B cell (primary cell): ENCODE measurements at regions of chr3 and their contacts with region 1.

Region 1: DNA sequence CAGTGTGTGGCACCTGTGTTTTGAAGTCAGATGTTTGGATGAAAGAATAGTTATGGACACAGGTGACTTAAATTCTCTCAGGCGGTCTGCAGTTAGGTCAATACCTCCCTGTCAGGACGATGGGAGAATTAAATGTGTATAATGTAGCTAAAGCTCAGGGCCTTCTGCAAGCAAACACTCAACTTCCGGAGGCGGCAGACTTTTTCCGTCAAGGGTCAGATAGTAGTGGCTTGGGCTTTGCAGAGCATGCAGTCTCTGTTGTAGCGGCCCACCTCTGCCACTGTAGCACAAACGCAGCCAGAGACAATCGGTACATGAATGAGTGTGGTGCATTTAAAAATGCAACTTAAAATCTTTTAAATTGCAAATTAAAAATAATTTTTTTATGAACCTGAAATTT is 47.4 kb downstream of the CMTM8 start:
- DNase-seq: no peak
- ATAC-seq: peak; percentile 39
- H3K4me3 ChIP-seq: no peak overlapping the region
- H3K4me3 Mint-ChIP-seq: peak overlapping the region; percentile 8
- H3K27ac ChIP-seq: peak overlapping the region in 1 of 2 donors; percentile 43
- H3K27ac Mint-ChIP-seq: peak overlapping the region; percentile 34
- H3K4me1 ChIP-seq: peaks cover 24 to 32% of the 10 kb centered on the region in 2 donors
- H3K4me1 Mint-ChIP-seq: peaks cover 30% of the 10 kb centered on the region
- H3K27me3 ChIP-seq: peaks cover 0 to 4% (median 0%) of the 10 kb centered on the region in 4 experiments
- H3K27me3 Mint-ChIP-seq: peaks cover 4% of the 10 kb centered on the region
- CTCF ChIP-seq: no peak

Region 2: GRCh38 chr3:32238453-32239306 is 47.2 kb before region 1 on chr3 and contains the start of gene CMTM8:
- CTCF ChIA-PET with region 1: no interaction called
- POLR2A ChIA-PET with region 1: no interaction called
- intact Hi-C with region 1: loop called (anchors 5 kb)
- DNase-seq: peak; percentile 63
- ATAC-seq: peak; percentile 74
- H3K4me3 ChIP-seq: peak within 1 kb of the TSS; percentile 0 to 63 (median 57)
- H3K4me3 Mint-ChIP-seq: peak within 1 kb of the TSS; percentile 86
- H3K27ac ChIP-seq: no peak within 1 kb of the TSS
- H3K27ac Mint-ChIP-seq: no peak within 1 kb of the TSS
- H3K4me1 ChIP-seq: peaks cover 17 to 22% of the 10 kb centered on the region in 2 donors
- H3K4me1 Mint-ChIP-seq: peaks cover 24% of the 10 kb centered on the region
- H3K27me3 ChIP-seq: peaks cover 0 to 28% (median 11%) of the 10 kb centered on the region in 4 experiments
- H3K27me3 Mint-ChIP-seq: peaks cover 52% of the 10 kb centered on the region
- CTCF ChIP-seq: no peak
- total RNA-seq, gene CMTM8: 0.25 TPM in 1 of 2 replicates, not detected in the other

Region 3: GRCh38 chr3:32684800-32685542 is 399.1 kb after region 1 on chr3 and contains the start of gene CNOT10:
- CTCF ChIA-PET with region 1: no interaction called
- POLR2A ChIA-PET with region 1: no interaction called
- intact Hi-C with region 1: no loop called
- DNase-seq: peak; percentile 97
- ATAC-seq: peak; percentile 93
- H3K4me3 ChIP-seq: peak within 1 kb of the TSS; percentile 76 to 97 (median 88)
- H3K4me3 Mint-ChIP-seq: peak within 1 kb of the TSS; percentile 95
- H3K27ac ChIP-seq: peak within 1 kb of the TSS; percentile 77 to 95
- H3K27ac Mint-ChIP-seq: peak within 1 kb of the TSS; percentile 95
- H3K4me1 ChIP-seq: peaks cover 19 to 20% of the 10 kb centered on the region in 2 donors
- H3K4me1 Mint-ChIP-seq: peaks cover 36% of the 10 kb centered on the region
- H3K27me3 ChIP-seq: no peaks in the 10 kb centered on the region
- H3K27me3 Mint-ChIP-seq: no peaks in the 10 kb centered on the region
- CTCF ChIP-seq: no peak
- total RNA-seq, gene CNOT10: 66.2 and 69.0 TPM in 2 replicates